CD8-positive, alpha-beta memory T cell (primary cell): ENCODE measurements at regions of chr2 and their contacts with region 1.

Region 1: DNA sequence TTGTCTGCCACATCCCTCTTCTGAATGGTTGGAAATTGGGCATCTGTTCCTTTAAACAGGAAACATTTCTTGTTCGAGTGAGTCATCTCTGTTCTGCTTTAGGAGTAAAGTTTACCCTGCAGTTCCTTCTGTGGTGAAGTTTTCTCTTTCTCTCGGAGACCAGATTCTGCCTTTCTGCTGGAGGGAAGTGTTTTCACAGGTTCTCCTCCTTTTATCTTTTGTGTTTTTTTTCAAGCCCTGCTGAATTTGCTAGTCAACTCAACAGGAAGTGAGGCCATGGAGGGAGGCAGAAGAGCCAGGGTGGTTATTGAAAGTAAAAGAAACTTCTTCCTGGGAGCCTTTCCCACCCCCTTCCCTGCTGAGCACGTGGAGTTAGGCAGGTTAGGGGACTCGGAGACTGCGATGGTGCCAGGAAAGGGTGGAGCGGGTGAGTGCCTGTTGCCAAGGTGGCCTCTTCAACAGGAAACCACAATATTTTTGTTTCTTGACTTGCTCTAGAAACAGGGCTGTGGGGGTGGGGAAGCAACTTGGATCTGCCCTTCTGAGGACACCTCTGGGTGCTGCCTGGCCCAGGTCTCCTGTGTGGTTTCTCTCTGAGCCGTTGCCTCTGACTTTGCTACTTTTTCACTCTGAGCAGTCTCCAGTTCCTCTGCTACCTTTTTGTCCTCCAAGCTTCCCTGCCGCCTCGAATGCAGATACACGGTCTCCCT is 2.2 kb upstream of the CASP8 start:
- DNase-seq: peak; percentile 84 to 98 (median 96)
- H3K4me3 ChIP-seq: peak overlapping the region; percentile 82
- H3K4me3 Mint-ChIP-seq: peak overlapping the region; percentile 89 to 99 (median 96)
- H3K27ac ChIP-seq: peak overlapping the region; percentile 97
- H3K27ac Mint-ChIP-seq: peak overlapping the region; percentile 96 to 100 (median 98)
- H3K4me1 ChIP-seq: peaks cover 76% of the 10 kb centered on the region
- H3K4me1 Mint-ChIP-seq: peaks cover 66 to 75% (median 70%) of the 10 kb centered on the region in 3 donors
- H3K27me3 ChIP-seq: no peaks in the 10 kb centered on the region
- H3K27me3 Mint-ChIP-seq: peaks cover 0 to 7% of the 10 kb centered on the region in 2 donors

Region 2: DNA sequence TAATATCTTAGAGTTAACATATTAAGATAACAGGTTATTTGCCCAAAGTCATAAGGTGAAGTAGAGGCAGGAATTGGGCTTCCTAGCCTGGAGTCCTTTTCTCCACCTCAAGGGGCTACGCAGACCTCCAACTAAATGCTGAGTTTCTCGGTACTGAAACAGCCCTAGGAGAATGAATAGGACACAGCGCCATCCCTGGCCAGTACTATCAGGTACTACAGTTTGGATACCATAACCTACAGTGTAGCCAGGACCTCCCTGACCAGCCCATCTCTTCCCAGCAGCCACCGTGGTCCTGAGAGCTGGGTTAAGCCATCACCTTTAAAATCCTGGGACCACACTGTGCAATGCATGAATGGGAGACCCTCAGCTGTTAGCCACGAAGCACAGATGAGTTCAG is 17.9 kb after region 1 on chr2:
- CTCF ChIA-PET with region 1: interaction called, 8 read pairs
- POLR2A ChIA-PET with region 1: interaction called, 13 read pairs
- DNase-seq: no peak
- H3K4me3 ChIP-seq: no peak overlapping the region
- H3K4me3 Mint-ChIP-seq: no peak overlapping the region
- H3K27ac ChIP-seq: no peak overlapping the region
- H3K27ac Mint-ChIP-seq: peak overlapping the region in 6 of 8 donors; percentile 25 to 87 (median 56)
- H3K4me1 ChIP-seq: peaks cover 45% of the 10 kb centered on the region
- H3K4me1 Mint-ChIP-seq: peaks cover 61 to 84% (median 83%) of the 10 kb centered on the region in 3 donors
- H3K27me3 ChIP-seq: no peaks in the 10 kb centered on the region
- H3K27me3 Mint-ChIP-seq: no peaks in the 10 kb centered on the region